ENCODE measurements at regions of chr1 and their contacts with region 1.

Region 1: GRCh38 chr1:114511032-114511785 is at the start of gene TRIM33:
- DNase-seq: peak; percentile 94 to 97
- ATAC-seq: peak; percentile 97
- H3K4me3 ChIP-seq: peak within 1 kb of the TSS; percentile 55 to 83
- H3K27ac ChIP-seq: peak within 1 kb of the TSS; percentile 78 to 89
- H3K4me1 ChIP-seq: no peaks in the 10 kb centered on the region
- H3K27me3 ChIP-seq: no peaks in the 10 kb centered on the region
- total RNA-seq, gene TRIM33: 39.3 to 42.8 TPM

Region 2: DNA sequence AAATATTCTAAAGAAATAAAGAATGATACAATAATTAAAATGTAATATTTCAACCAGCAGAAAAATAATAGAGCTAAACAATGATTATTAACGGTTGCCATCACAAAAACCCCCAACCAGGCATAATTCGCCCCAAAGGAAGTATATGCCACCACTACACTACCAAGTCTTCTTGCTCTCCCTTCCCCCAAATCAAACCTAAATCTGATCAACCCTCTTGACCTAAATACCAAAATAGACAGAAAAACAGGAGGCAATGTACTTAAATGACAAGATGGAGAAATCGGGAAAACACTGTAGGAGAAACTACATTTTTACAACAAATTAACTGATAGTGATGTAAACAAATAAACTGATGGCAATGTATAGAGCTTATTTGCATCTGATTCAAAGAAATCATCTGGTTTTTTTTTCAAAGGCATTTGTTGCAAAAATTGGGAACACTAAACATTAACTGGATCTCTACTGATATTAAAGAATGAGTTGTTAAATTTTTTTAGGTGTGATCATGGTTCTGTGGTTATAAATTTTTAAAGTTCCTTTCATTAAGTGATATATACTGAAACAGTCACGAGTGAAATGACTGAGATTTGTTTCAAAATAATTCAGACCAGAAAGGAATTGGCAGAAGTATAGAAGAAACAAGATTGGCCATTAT is 103.2 kb before region 1 on chr1:
- intact Hi-C with region 1: no loop called
- DNase-seq: no peak
- ATAC-seq: no peak
- H3K4me3 ChIP-seq: no peak overlapping the region
- H3K27ac ChIP-seq: no peak overlapping the region
- H3K4me1 ChIP-seq: no peaks in the 10 kb centered on the region
- H3K27me3 ChIP-seq: no peaks in the 10 kb centered on the region

Region 3: DNA sequence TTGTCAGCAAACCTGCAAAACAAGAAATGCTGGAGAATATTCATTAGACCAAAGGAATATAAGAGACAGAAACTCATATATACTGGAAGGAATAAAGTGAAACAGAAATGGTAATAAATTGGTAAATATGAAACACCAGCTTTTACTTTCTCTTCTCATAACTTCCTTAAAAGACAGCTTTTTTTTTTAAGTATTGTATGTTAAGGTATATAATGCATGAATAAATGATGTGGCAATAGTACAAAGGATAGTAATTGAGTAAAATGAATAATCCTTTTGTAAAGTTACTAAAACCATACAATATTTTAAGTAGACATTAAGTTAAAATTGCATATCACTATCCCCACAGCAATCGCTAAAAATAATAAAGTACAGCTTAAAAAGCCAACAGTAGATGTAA is 65.0 kb before region 1 on chr1:
- intact Hi-C with region 1: loop called in 1 of 2 experiments (anchors 10 kb)
- DNase-seq: no peak
- ATAC-seq: no peak
- H3K4me3 ChIP-seq: no peak overlapping the region
- H3K27ac ChIP-seq: no peak overlapping the region
- H3K4me1 ChIP-seq: no peaks in the 10 kb centered on the region
- H3K27me3 ChIP-seq: no peaks in the 10 kb centered on the region

Region 4: DNA sequence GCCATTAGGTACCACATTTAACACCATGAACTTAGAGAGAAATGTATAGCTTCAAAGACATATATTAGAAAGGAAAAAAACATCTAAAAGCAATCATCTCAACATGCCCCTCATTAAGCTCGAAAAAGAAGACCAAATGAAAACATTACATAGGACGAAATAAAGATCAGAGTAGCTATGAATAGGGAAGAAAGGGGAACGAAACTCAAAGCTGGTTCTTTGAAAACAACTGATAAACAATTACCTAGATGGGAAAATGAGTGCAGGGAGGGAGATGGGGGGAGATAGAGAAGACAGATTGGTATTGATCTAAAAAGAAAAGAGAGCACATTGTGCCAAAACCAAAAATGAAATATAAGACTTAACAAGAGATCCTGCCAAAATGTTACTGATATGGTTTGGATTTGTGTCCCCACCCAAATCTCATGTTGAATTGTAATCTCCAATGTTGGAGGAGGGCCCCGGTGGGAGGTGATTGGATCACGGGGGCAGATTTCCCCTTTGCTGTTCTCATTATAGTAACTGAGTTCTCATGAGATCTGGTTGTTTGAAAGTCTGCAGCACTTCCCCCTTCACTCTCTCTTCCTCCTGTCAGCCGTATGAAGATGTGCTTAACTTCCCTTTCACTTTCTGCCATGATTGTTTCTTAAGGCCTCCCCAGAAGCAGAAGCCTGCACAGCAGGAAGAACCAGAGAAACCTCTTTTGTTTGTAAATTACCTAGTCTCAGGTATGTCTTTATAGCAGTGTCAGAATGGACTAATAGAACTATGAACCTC is 28.8 kb before region 1 on chr1:
- intact Hi-C with region 1: no loop called
- DNase-seq: no peak
- ATAC-seq: no peak
- H3K4me3 ChIP-seq: no peak overlapping the region
- H3K27ac ChIP-seq: no peak overlapping the region
- H3K4me1 ChIP-seq: peaks cover 0 to 6% of the 10 kb centered on the region in 2 donors
- H3K27me3 ChIP-seq: no peaks in the 10 kb centered on the region

Region 5: DNA sequence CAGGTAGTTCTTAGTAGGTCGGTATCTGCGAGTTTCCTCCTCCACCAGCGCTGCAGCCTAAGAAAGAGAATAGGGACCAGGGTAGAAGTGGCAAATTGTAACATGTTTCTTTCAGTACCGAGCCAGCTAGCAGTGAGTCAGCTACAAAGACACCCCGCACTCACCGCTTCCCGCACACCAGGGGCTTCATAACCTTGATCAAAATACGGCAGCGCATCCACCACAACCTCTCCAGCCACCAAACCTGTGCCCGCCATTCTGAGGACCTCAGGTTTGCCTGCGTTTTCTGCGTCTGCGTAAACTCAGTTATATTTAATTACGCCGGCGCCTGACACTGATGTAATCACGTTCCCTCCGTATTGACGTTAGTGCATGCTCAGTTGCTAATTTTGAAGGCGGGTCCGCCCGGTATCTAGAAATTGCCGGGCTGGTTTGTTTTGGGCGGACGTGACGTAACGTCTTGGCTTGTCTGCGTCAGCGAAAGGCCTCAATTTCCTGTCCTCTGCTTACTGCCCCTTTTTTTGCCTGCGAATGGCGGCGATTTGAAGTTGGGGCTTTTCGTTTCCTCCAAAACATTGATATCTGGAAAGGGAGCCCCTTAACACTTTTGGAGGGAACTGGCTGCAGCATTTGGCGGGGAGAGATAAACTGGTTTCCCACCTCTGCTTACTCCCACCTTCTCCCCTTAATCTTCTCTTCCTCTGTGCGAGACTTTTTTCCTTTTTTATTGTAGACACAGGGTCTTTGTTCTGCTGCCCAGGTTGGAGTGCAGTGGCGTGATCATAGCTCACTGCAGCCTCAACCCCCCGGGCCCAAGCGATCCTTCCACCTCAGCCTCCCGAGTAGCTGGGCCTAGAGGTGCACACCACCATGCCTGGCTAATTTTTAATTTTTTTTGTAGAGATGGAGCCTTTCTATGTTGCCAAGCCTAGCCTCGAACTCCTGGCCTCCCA is 70.4 kb after region 1 on chr1 and contains the start of gene BCAS2:
- intact Hi-C with region 1: loop called (anchors 5 kb)
- DNase-seq: peak; percentile 97 to 98
- ATAC-seq: peak; percentile 98
- H3K4me3 ChIP-seq: peak within 1 kb of the TSS; percentile 32 to 89
- H3K27ac ChIP-seq: peak within 1 kb of the TSS; percentile 15 to 71
- H3K4me1 ChIP-seq: peaks cover 0 to 4% of the 10 kb centered on the region in 2 donors
- H3K27me3 ChIP-seq: no peaks in the 10 kb centered on the region
- total RNA-seq, gene BCAS2: 23.9 to 29.8 TPM

Region 6: DNA sequence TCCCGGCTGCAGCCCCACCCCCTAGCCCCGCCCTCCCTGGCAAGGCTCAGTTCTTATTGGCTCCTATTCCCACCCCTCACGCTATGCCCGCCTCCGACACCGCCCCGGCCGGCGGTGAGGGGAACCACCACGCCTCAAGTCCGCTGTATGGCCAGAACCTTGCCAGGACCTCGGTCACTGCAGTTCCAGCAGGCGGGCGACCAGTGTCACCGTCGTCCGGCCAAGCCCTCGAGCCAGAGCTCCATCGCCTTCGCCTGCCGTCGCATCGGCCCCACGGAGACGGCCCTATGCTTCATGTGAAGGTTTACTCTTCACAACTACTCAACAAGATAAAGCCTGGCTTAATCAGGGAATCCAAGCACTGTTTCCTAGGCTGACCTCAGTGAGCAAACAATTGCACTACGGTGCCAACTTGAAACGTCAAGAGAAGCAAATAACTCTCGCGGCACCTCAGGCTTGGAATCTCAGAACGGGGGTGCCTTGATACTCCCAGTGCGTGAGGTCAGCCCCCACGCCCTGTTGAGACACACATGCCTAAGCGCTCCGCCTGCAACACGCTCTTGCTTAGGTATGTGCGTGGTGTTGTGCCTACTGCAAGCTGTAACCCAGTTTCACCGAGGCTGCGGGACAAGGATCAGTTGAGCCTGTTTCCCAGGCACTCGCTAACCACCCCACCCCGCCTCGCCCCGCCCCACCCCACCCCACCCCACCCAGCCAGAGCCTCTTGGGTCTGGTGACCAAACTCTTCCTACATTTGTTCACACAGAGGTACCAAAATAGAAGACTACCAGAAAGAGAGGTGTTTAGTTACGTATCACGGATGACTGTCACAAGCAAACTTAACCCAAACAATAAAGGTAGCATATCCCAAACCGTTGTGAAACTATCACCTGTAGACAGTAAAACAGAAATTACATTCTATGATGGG is 159.1 kb after region 1 on chr1:
- intact Hi-C with region 1: loop called in 1 of 2 experiments (anchors 2 kb)
- DNase-seq: peak; percentile 96 to 98
- ATAC-seq: peak; percentile 100
- H3K4me3 ChIP-seq: peak overlapping the region; percentile 65 to 97
- H3K27ac ChIP-seq: peak overlapping the region in 1 of 2 donors; percentile 24
- H3K4me1 ChIP-seq: no peaks in the 10 kb centered on the region
- H3K27me3 ChIP-seq: no peaks in the 10 kb centered on the region

Measured in aorta (tissue), 5 donors.